Esophagus squamous epithelium (tissue), 5 donors: ENCODE measurements at regions of chr10 and their contacts with region 1.

Region 1: GRCh38 chr10:74262856-74263255 is 111.8 kb downstream of the ADK start:
- DNase-seq: no peak
- H3K4me3 ChIP-seq: no peak overlapping the region
- H3K27ac ChIP-seq: no peak overlapping the region
- H3K4me1 ChIP-seq: no peaks in the 10 kb centered on the region
- H3K27me3 ChIP-seq: no peaks in the 10 kb centered on the region
- CTCF ChIP-seq: no peak
- POLR2A ChIP-seq: no peak

Region 2: GRCh38 chr10:74189999-74190421 is 72.8 kb before region 1 on chr10:
- intact Hi-C with region 1: no loop called
- DNase-seq: no peak
- H3K4me3 ChIP-seq: peak overlapping the region in 3 of 4 donors; percentile 22 to 26 (median 22)
- H3K27ac ChIP-seq: peak overlapping the region; percentile 77 to 90 (median 85)
- H3K4me1 ChIP-seq: peaks cover 21 to 86% (median 35%) of the 10 kb centered on the region in 3 donors
- H3K27me3 ChIP-seq: no peaks in the 10 kb centered on the region
- CTCF ChIP-seq: no peak
- POLR2A ChIP-seq: no peak

Region 3: GRCh38 chr10:75029857-75030256 is 767.0 kb after region 1 on chr10:
- intact Hi-C with region 1: loop called (anchors 10 kb)
- DNase-seq: no peak
- H3K4me3 ChIP-seq: no peak overlapping the region
- H3K27ac ChIP-seq: no peak overlapping the region
- H3K4me1 ChIP-seq: peaks cover 0 to 6% (median 0%) of the 10 kb centered on the region in 3 donors
- H3K27me3 ChIP-seq: no peaks in the 10 kb centered on the region
- CTCF ChIP-seq: no peak
- POLR2A ChIP-seq: no peak

Region 4: DNA sequence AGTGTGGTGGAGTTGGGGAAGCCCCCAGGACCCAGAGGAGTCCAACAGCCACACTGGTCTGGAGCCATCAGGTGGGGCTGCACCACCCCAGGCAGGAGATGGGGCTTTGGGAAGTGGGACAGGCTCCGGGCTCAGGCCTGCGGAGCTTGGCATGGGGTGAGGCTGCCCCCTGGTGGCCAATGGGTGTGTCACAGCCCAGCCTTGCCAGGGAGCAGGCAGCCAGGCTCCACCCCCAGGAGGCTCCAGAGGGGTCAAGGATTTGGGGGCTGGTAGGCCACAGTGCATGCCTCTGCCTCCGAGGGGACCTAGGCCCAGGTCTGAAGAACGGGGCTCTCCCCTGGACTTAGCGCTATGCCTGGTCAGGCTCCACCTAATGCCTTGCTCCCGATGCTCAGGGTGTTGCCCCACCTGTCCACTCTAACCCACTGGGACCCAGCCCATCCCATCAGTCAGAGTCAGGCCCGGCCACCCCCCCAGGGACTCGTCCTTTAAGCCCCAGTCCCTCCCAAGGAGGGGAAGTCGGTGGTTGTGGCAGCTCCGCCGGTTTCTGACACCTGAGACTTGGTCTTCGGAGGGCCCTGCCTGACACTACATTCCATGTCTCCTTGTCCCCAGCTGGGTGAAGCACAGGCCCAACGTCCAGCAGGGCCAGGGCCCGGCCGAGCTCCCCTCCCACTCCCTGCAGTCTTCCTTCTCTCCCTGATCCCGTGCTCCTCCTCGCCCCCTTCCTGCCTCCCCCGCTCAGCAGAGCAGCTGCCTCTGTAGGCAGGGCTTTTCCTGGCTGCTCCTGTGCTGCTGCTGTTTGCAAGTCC is 837.3 kb after region 1 on chr10:
- intact Hi-C with region 1: loop called (anchors 5 kb)
- DNase-seq: no peak
- H3K4me3 ChIP-seq: no peak overlapping the region
- H3K27ac ChIP-seq: no peak overlapping the region
- H3K4me1 ChIP-seq: peaks cover 21 to 42% (median 24%) of the 10 kb centered on the region in 3 donors
- H3K27me3 ChIP-seq: no peaks in the 10 kb centered on the region
- CTCF ChIP-seq: peak; percentile 95 to 99 (median 96)
- POLR2A ChIP-seq: no peak